Left ventricle myocardium superior (tissue), 1 donor: ENCODE measurements at regions of chr13 and their contacts with region 1.

Region 1: GRCh38 chr13:66180806-66181205 is 1049.3 kb downstream of the PCDH9 start:
- DNase-seq: no peak
- ATAC-seq: no peak

Region 2: DNA sequence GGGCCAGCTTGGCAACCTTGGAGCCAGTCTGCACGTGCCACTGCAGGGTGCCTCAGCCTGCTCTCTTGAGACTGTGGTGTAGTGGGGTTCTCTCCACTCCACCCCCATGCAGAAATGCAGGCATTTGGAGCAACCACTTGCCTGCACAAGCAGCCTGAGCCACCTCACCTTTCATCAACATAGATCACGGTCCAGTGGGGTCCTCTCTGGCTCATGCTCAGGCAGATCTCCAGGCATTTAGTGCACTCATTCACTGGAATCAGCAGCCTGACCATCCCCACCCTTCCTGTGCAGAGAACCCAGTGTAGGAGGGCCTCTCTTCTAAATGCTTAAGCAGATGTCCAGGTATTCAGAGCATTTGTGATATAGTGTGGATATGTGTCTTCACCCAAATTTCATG is 1280.8 kb before region 1 on chr13:
- intact Hi-C with region 1: no loop called
- DNase-seq: no peak
- ATAC-seq: no peak

Region 3: DNA sequence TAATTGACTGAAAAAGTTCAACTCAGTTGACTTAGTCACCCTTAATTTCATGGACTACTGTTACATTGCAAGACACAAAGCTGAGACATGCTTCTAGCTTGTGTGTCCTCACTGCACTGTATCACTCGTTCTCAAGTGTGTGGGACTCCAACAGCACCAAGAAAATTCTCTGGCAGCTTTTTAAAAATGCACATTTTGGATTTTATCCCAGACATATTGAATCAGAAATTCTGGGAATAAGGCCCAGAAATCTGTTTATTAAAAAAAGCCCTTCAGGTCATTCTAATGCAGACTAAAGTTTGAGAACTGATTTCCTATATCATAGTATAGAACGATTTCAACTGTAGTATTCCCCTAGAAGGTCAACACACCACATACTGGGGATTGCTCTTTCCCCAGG is 436.0 kb before region 1 on chr13:
- intact Hi-C with region 1: no loop called
- DNase-seq: no peak
- ATAC-seq: no peak

Region 4: DNA sequence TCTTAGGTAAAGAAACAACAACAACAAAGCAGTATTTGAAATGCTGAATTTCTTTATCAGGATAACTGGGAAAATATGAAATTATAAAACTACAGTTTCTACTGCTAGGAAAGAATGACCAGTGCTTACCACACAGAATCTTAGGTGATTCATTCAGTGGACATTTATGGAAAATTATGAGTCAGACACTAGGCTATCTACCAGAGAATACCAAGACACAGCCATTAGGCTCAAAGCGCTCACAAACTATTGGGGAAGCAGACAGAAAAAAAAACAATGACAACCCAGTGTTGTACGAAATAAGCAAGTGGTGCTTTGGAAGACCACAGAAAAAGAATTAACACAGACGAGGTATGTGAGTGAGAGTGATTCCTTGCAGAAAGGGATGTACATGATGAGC is 29.9 kb after region 1 on chr13:
- intact Hi-C with region 1: loop called (anchors 2 kb)
- DNase-seq: no peak
- ATAC-seq: no peak